ENCODE measurements at regions of chr6 and their contacts with region 1.

Region 1: DNA sequence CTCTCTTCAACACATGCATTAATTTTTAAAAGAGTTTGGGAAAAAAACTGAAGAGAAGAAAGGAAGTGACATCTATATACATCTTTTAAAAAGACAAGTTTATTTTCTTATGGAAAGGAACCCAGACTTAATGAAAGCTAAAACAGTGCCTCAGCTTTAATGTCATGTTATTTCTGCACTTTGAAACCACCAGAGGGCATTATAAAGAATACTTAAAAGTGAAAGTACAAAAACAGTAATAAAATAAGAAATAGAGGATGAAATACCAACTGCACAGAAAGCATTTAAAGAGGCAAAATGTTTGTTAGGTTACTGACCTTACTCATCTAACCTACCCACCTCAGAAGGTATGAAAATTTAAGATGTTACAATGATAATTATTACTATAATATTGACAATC is 98.8 kb downstream of the HUS1B start:
- DNase-seq: no peak
- H3K4me3 Mint-ChIP-seq: no peak overlapping the region
- H3K27ac Mint-ChIP-seq: peak overlapping the region; percentile 72
- H3K4me1 Mint-ChIP-seq: peaks cover 28% of the 10 kb centered on the region
- H3K27me3 Mint-ChIP-seq: no peaks in the 10 kb centered on the region

Region 2: GRCh38 chr6:568954-569523 is 10.9 kb after region 1 on chr6:
- CTCF ChIA-PET with region 1: interaction called, 17 read pairs
- DNase-seq: no peak
- H3K4me3 Mint-ChIP-seq: no peak overlapping the region
- H3K27ac Mint-ChIP-seq: no peak overlapping the region
- H3K4me1 Mint-ChIP-seq: peaks cover 8% of the 10 kb centered on the region
- H3K27me3 Mint-ChIP-seq: no peaks in the 10 kb centered on the region

Region 3: GRCh38 chr6:786946-787763 is 229.1 kb after region 1 on chr6:
- CTCF ChIA-PET with region 1: no interaction called
- DNase-seq: peak; percentile 37
- H3K4me3 Mint-ChIP-seq: no peak overlapping the region
- H3K27ac Mint-ChIP-seq: no peak overlapping the region
- H3K4me1 Mint-ChIP-seq: peaks cover 16% of the 10 kb centered on the region
- H3K27me3 Mint-ChIP-seq: peaks cover 34% of the 10 kb centered on the region

Region 4: GRCh38 chr6:885051-885590 is 327.0 kb after region 1 on chr6:
- CTCF ChIA-PET with region 1: no interaction called
- DNase-seq: no peak
- H3K4me3 Mint-ChIP-seq: no peak overlapping the region
- H3K27ac Mint-ChIP-seq: peak overlapping the region; percentile 17
- H3K4me1 Mint-ChIP-seq: peaks cover 25% of the 10 kb centered on the region
- H3K27me3 Mint-ChIP-seq: peaks cover 21% of the 10 kb centered on the region